K562 (cell line): ENCODE measurements at regions of chr2 and their contacts with region 1.

Region 1: DNA sequence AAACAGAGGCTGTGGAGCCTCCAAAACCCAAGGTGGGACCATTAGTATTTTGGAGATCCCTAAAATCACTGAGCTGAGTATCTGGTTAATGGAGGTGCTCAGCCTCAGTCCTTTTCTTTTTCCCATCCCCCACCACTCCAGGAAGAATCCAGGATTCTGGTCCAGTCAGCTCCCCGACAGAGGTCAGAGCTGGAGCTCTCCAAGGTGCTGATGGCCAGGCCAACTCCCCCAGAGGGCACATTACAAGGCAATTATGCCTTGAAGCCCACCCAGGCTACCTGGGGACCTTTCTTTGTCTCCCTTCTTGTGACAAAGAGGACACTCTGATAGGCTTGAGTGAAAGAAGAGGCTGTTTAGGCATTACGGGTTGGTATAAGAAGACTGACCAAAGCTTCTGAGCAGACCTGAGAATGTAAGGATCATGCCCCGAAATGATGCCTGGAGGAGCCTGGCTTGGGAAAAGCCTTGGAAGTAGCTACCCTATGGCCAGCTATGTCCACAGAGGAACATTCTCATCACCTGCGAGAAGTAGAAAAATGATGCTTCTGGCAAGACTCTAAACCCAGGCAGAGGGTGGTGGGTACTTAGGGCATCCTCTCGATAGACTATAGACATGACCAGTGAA is 102.5 kb upstream of the LDAH start:
- DNase-seq: peak; percentile 15 to 44 (median 30)
- ATAC-seq: no peak
- H3K4me3 ChIP-seq: no peak overlapping the region
- H3K27ac ChIP-seq: no peak overlapping the region
- H3K4me1 ChIP-seq: no peaks in the 10 kb centered on the region
- H3K27me3 ChIP-seq: no peaks in the 10 kb centered on the region
- CTCF ChIP-seq: no peak
- EP300 ChIP-seq: no peak
- POLR2A ChIP-seq: no peak
- RAD21 ChIP-seq: no peak

Region 2: DNA sequence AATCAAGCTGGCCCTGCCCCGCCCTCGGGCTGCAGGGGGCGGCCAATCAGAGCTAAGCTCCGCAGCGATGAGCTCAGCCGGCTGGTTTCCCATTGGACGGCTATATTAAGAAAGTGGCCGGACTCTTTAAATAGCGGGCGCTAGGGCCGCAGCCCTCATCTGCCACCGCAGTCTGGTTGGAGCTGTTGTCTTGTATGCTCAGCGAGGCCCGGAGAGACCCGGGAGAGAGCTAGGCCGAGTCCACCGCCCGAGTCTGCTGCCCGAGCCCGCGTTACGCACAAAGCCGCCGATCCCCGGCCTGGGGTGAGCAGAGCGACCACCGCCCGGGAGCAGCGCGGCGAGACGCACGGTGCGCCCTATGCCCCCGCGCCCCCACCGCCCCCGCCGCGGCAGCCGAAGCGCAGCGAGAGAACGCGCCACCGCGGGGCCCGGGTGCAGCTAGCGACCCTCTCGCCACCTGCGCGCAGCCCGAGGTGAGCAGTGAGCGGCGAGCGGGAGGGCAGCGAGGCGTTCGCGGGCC is 478.4 kb before region 1 on chr2 and contains the start of gene RHOB:
- CTCF ChIA-PET with region 1: no interaction called
- POLR2A ChIA-PET with region 1: no interaction called
- in situ Hi-C with region 1: loop called (anchors 25 kb)
- intact Hi-C with region 1: no loop called
- DNase-seq: peak; percentile 86 to 95 (median 94)
- ATAC-seq: peak; percentile 99
- H3K4me3 ChIP-seq: peak within 1 kb of the TSS; percentile 36
- H3K27ac ChIP-seq: peak within 1 kb of the TSS; percentile 56; the same call in 2 of the 3 replicates
- H3K4me1 ChIP-seq: peaks cover 0 to 21% of the 10 kb centered on the region in 2 experiments; a peak in 2 of 5 replicates
- H3K27me3 ChIP-seq: 0 out of 5 replicates have a peak, but pooled peaks cover 0 to 7% of the 10 kb centered on the region in 2 experiments
- CTCF ChIP-seq: no peak
- EP300 ChIP-seq: no peak
- POLR2A ChIP-seq: peak; percentile 72
- RAD21 ChIP-seq: no peak
- polyA plus RNA-seq, gene RHOB: 0.07 to 0.17 TPM